IMR-90 (cell line): ENCODE measurements at regions of chr14 and their contacts with region 1.

Region 1: DNA sequence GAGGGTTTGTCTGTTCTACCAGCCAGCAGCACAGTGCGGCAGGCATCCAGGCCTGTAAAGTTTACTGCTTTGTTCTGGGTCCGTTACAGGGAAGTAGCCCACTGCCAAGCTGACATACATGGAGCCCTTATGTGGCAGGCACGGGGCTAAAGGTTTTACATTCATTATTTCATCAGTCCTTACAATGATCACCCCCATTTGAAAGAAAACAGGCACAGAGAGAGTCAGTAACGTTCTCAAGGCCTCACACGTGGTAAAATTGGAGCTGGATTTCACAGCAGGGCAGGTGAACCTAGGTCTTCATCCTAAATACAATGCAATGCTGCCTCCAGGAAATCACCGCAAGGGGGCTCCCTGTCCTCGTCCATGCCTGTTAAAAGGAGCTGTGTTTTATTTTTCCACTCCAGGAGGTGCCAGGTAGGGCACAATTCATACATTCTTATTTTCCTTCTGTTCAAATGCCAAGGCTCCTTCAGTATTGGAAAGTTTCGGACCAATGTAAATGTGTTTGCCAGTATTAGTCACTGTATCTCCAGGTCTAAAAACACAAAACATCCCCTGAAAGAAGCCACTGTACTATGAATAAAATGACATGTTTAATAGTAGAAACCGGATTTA is 172.2 kb upstream of the GZMB start:
- DNase-seq: peak; percentile 45
- ATAC-seq: peak; percentile 67
- H3K4me3 ChIP-seq: no peak overlapping the region
- H3K27ac ChIP-seq: no peak overlapping the region
- H3K4me1 ChIP-seq: peaks cover 2% of the 10 kb centered on the region; the same call in 1 of the 2 replicates
- H3K27me3 ChIP-seq: no peaks in the 10 kb centered on the region
- CTCF ChIP-seq: peak; percentile 79
- POLR2A ChIP-seq: 0 out of 2 replicates have a peak, but pooled peaks have one; percentile 41
- RAD21 ChIP-seq: peak; percentile 91

Region 2: DNA sequence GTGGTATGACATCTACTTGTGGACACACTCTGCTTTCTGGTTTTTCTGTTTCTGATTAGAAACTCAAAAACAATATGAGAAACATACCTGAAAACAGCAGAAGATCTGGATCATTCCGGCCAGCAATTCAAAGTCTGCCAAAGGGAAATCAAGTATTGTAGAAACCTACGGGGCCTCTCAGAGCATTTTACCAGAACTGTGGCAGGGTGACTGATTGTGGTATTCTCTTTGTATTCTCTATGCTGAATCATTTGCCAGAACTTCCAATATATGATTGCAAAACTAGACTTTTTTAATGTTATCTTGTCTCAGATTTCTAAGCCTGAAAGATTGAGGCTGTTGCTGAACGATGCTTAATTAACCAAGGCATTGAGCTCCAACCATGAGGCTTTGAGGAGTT is 166.3 kb before region 1 on chr14:
- CTCF ChIA-PET with region 1: no interaction called
- POLR2A ChIA-PET with region 1: no interaction called
- dilution Hi-C with region 1: no loop called
- in situ Hi-C with region 1: no loop called
- intact Hi-C with region 1: no loop called
- DNase-seq: no peak
- ATAC-seq: no peak
- H3K4me3 ChIP-seq: no peak overlapping the region
- H3K27ac ChIP-seq: no peak overlapping the region
- H3K4me1 ChIP-seq: no peaks in the 10 kb centered on the region
- H3K27me3 ChIP-seq: no peaks in the 10 kb centered on the region
- CTCF ChIP-seq: no peak
- POLR2A ChIP-seq: no peak
- RAD21 ChIP-seq: no peak

Region 3: GRCh38 chr14:24817212-24818057 is 11.3 kb after region 1 on chr14:
- CTCF ChIA-PET with region 1: no interaction called
- POLR2A ChIA-PET with region 1: no interaction called
- dilution Hi-C with region 1: no loop called
- in situ Hi-C with region 1: no loop called
- intact Hi-C with region 1: no loop called
- DNase-seq: peak; percentile 52
- ATAC-seq: peak; percentile 92
- H3K4me3 ChIP-seq: no peak overlapping the region
- H3K27ac ChIP-seq: no peak overlapping the region
- H3K4me1 ChIP-seq: no peaks in the 10 kb centered on the region
- H3K27me3 ChIP-seq: no peaks in the 10 kb centered on the region
- CTCF ChIP-seq: peak; percentile 62
- POLR2A ChIP-seq: no peak
- RAD21 ChIP-seq: peak; percentile 81

Region 4: GRCh38 chr14:25042362-25043299 is 236.5 kb after region 1 on chr14:
- CTCF ChIA-PET with region 1: interaction called, 3 read pairs
- POLR2A ChIA-PET with region 1: no interaction called
- dilution Hi-C with region 1: no loop called
- in situ Hi-C with region 1: no loop called
- intact Hi-C with region 1: loop called (anchors 1 kb)
- DNase-seq: peak; percentile 68
- ATAC-seq: peak; percentile 51
- H3K4me3 ChIP-seq: no peak overlapping the region
- H3K27ac ChIP-seq: no peak overlapping the region
- H3K4me1 ChIP-seq: no peaks in the 10 kb centered on the region
- H3K27me3 ChIP-seq: no peaks in the 10 kb centered on the region
- CTCF ChIP-seq: peak; percentile 54
- POLR2A ChIP-seq: no peak
- RAD21 ChIP-seq: peak; percentile 77

Region 5: DNA sequence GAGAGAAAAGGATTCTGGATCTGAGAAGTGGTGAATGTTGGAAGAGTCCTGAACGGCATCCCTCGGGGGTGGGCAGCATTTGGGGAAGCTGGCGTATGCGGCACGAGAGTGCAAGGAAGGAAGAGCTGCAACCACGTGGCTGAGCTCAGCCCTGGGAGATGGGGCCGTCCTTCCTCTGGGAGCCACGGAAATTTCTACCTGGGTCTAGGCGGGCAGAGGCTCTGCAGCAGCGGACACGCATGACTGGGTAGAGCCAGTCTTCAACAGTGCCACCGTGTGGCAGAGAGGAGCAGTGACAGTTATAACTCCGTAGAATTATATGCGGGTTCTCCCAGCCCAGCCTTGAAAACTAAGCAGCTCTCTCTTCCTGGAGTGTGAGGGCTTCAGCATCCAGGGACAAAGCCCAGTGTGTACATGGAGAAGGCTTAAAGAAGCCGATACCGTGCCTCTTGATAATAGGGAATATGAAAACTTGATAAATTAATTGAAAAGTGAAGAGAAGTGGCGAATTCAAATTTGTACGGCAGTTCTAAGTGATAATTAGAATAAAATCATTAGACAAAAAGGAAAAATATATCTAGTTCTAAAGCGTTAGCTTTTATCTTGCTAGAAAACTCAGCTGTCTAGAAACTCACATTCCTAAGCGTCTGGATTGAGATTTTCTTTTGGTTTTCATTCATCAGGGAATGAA is 326.7 kb after region 1 on chr14:
- CTCF ChIA-PET with region 1: interaction called, 4 read pairs
- POLR2A ChIA-PET with region 1: no interaction called
- dilution Hi-C with region 1: no loop called
- in situ Hi-C with region 1: no loop called
- intact Hi-C with region 1: loop called (anchors 1 kb)
- DNase-seq: peak; percentile 55
- ATAC-seq: peak; percentile 100
- H3K4me3 ChIP-seq: no peak overlapping the region
- H3K27ac ChIP-seq: no peak overlapping the region
- H3K4me1 ChIP-seq: no peaks in the 10 kb centered on the region
- H3K27me3 ChIP-seq: peaks cover 16% of the 10 kb centered on the region
- CTCF ChIP-seq: peak; percentile 81
- POLR2A ChIP-seq: no peak
- RAD21 ChIP-seq: peak; percentile 86

Region 6: DNA sequence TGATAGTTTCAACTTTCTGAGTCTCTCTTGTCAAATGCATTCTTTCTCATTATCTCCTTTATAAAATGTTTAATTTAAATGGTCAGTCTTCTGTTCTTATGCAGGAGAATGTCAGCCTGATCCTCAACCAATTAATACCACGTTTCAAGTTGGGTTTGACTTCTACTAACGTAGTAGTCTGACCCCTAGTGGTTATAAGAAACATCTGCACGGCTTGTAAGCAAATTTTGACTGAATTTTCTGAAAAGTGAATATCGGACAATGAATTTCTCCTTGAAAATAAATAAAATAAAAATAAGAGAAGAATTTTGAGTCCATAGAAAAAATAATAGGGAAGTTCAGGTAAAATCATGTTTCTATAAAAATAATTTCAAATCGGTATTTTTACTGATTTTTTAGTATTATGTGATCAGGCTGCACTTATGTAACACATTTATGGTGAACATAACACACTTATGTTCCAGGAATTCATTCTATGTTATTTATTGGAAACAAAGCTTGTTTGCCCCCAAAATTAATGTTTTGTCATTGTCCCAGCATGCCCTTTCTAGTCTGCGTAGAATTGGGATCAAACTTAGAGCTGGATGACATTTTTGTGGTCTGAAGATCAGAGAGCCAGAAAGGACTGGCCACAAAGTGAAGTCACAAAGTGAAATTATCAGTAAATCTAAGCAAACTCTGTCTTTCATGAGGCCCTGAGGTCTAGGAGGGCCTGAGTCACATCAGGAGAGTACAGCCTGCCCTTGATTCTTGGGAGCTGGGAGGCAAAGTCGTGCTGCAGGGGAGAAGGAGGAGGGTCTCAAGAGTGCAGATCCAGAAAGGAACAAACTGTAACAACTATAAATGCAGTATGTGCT is 345.0 kb after region 1 on chr14:
- CTCF ChIA-PET with region 1: no interaction called
- POLR2A ChIA-PET with region 1: no interaction called
- dilution Hi-C with region 1: no loop called
- in situ Hi-C with region 1: no loop called
- intact Hi-C with region 1: loop called (anchors 1 kb)
- DNase-seq: peak; percentile 71
- ATAC-seq: peak; percentile 82
- H3K4me3 ChIP-seq: no peak overlapping the region
- H3K27ac ChIP-seq: no peak overlapping the region
- H3K4me1 ChIP-seq: no peaks in the 10 kb centered on the region
- H3K27me3 ChIP-seq: peaks cover 1% of the 10 kb centered on the region
- CTCF ChIP-seq: peak; percentile 78
- POLR2A ChIP-seq: no peak
- RAD21 ChIP-seq: peak; percentile 76

Region 7: DNA sequence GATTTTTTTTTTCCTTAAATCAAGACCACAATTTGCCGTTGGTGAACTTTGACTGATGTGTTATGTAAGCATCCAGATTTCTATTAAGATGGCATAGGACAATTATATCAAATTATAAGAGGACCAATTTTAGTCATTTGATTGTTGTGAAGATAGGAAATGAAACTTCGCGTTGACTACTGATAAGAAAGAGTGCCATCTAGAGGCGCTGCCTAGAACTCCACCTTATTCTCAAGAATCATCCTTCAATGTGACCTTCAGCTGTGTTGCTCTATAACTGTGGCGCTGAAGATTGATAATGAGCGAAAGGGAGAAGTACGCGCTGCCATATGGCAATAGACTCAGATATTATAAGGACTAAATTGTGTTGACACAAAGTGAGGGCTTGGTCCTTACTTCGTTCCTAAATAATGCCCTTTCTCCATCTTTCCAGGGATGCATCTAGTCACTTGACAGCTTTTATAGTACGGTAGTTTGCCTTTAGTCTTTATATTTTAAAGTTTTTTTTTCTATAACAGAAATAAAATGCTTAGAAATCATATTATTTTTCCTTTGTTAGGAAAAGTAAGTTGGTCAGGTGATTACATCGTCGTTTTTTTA is 594.5 kb after region 1 on chr14:
- CTCF ChIA-PET with region 1: no interaction called
- POLR2A ChIA-PET with region 1: no interaction called
- dilution Hi-C with region 1: no loop called
- in situ Hi-C with region 1: no loop called
- intact Hi-C with region 1: loop called (anchors 5 kb)
- DNase-seq: peak; percentile 29
- ATAC-seq: peak; percentile 57; the same call in 1 of the 2 replicates
- H3K4me3 ChIP-seq: no peak overlapping the region
- H3K27ac ChIP-seq: no peak overlapping the region
- H3K4me1 ChIP-seq: no peaks in the 10 kb centered on the region
- H3K27me3 ChIP-seq: no peaks in the 10 kb centered on the region
- CTCF ChIP-seq: peak; percentile 69
- POLR2A ChIP-seq: no peak
- RAD21 ChIP-seq: peak; percentile 52

Region 8: GRCh38 chr14:25472700-25473099 is 666.5 kb after region 1 on chr14:
- CTCF ChIA-PET with region 1: no interaction called
- POLR2A ChIA-PET with region 1: no interaction called
- dilution Hi-C with region 1: no loop called
- in situ Hi-C with region 1: no loop called
- intact Hi-C with region 1: no loop called
- DNase-seq: no peak
- ATAC-seq: no peak
- H3K4me3 ChIP-seq: no peak overlapping the region
- H3K27ac ChIP-seq: no peak overlapping the region
- H3K4me1 ChIP-seq: no peaks in the 10 kb centered on the region
- H3K27me3 ChIP-seq: no peaks in the 10 kb centered on the region
- CTCF ChIP-seq: no peak
- POLR2A ChIP-seq: no peak
- RAD21 ChIP-seq: no peak